K562 (cell line): ENCODE measurements at regions of chr1 and their contacts with region 1.

Region 1: GRCh38 chr1:180188091-180188506 is 33.4 kb downstream of the QSOX1 start:
- DNase-seq: peak; percentile 68 to 77 (median 74)
- ATAC-seq: peak; percentile 90
- H3K4me3 ChIP-seq: no peak overlapping the region
- H3K27ac ChIP-seq: no peak overlapping the region
- H3K4me1 ChIP-seq: peaks cover 0 to 16% of the 10 kb centered on the region in 2 experiments; a peak in 3 of 5 replicates
- H3K27me3 ChIP-seq: no peaks in the 10 kb centered on the region
- CTCF ChIP-seq: peak; percentile 81 to 91 (median 84)
- EP300 ChIP-seq: no peak
- POLR2A ChIP-seq: no peak
- RAD21 ChIP-seq: peak; percentile 63 to 82

Region 2: DNA sequence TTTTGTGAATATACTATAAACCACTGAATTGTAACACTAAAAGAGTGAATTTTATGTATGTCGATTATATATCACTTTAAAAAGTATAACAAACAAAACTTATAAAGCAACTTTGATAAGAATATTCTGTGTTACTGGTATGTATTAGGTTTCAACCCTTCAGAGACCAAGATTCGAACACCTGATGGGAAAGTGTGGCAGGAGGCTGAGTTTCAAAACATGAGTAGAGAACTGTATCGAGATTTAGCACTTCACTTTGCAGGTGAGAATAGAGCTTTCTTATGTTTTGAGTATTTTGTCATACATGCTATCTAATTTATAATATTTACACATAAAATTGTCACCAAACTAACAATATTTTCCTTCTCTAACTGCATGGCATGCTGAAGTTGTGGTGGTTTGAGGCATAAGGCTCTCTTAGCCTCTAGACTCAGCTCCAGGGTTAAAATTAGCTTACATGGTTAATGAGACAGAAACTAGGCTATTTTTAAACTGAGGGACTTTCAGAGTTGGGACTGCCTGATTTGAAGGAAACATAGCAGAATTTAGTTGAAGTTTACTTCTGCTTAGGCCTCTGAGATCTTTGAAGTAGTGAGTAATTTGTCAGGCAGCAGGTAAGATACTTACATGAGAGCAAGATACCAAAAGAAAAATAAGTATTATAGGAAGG is 184.9 kb before region 1 on chr1:
- CTCF ChIA-PET with region 1: no interaction called
- POLR2A ChIA-PET with region 1: no interaction called
- in situ Hi-C with region 1: no loop called
- intact Hi-C with region 1: no loop called
- DNase-seq: no peak
- ATAC-seq: peak; percentile 23; the same call in 1 of the 3 replicates
- H3K4me3 ChIP-seq: no peak overlapping the region
- H3K27ac ChIP-seq: no peak overlapping the region
- H3K4me1 ChIP-seq: no peaks in the 10 kb centered on the region
- H3K27me3 ChIP-seq: no peaks in the 10 kb centered on the region
- CTCF ChIP-seq: no peak
- EP300 ChIP-seq: no peak
- POLR2A ChIP-seq: no peak
- RAD21 ChIP-seq: no peak

Region 3: GRCh38 chr1:180057883-180058396 is 130.2 kb before region 1 on chr1:
- CTCF ChIA-PET with region 1: no interaction called
- POLR2A ChIA-PET with region 1: no interaction called
- in situ Hi-C with region 1: no loop called
- intact Hi-C with region 1: no loop called
- DNase-seq: peak; percentile 15 to 46 (median 26)
- ATAC-seq: peak; percentile 91
- H3K4me3 ChIP-seq: no peak overlapping the region
- H3K27ac ChIP-seq: peak overlapping the region; percentile 61; the same call in 2 of the 3 replicates
- H3K4me1 ChIP-seq: peaks cover 0 to 13% of the 10 kb centered on the region in 2 experiments; a peak in 2 of 5 replicates
- H3K27me3 ChIP-seq: no peaks in the 10 kb centered on the region
- CTCF ChIP-seq: no peak
- EP300 ChIP-seq: peak; percentile 59
- POLR2A ChIP-seq: no peak
- RAD21 ChIP-seq: no peak

Region 4: DNA sequence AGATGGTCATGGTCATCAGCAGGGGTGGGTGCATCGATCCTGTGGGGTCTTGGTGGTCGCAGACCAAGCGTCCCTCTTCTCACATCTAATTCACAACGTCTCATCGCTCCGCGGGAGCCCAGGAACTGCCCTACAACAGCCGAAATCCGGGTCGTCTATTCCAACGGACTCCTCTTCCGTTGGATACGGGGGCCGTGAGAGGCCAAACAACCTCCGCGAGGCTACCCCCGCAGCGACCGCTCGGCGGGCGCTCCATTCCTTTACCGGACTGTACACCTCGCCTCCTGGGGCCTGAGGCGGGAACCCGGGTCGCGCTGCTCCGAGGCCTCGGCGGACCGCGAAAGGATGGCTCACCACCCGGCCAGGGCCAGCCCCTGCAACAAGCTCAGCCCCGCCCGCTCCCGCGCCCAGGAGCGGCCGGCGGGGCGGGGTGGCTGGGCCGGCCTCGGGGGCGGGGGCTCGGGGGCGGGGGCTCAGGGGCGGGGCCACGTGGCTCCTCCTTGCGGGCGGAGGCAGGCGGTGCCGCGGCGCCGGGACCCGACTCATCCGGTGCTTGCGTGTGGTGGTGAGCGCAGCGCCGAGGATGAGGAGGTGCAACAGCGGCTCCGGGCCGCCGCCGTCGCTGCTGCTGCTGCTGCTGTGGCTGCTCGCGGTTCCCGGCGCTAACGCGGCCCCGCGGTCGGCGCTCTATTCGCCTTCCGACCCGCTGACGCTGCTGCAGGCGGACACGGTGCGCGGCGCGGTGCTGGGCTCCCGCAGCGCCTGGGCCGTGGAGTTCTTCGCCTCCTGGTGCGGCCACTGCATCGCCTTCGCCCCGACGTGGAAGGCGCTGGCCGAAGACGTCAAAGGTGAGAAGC is 33.5 kb before region 1 on chr1 and contains the start of gene QSOX1:
- CTCF ChIA-PET with region 1: no interaction called
- POLR2A ChIA-PET with region 1: no interaction called
- in situ Hi-C with region 1: no loop called
- intact Hi-C with region 1: no loop called
- DNase-seq: peak; percentile 91 to 100 (median 99)
- ATAC-seq: peak; percentile 91
- H3K4me3 ChIP-seq: peak within 1 kb of the TSS; percentile 77
- H3K27ac ChIP-seq: peak within 1 kb of the TSS; percentile 77
- H3K4me1 ChIP-seq: peaks cover 33 to 37% of the 10 kb centered on the region in 2 experiments
- H3K27me3 ChIP-seq: no peaks in the 10 kb centered on the region
- CTCF ChIP-seq: peak in 2 of 3 experiments; percentile 10 to 48; a peak in 1 of 6 replicates
- EP300 ChIP-seq: peak; percentile 63; the same call in 1 of the 2 replicates
- POLR2A ChIP-seq: peak; percentile 85
- RAD21 ChIP-seq: no peak
- polyA plus RNA-seq, gene QSOX1: 4.0 to 4.6 TPM

Region 5: DNA sequence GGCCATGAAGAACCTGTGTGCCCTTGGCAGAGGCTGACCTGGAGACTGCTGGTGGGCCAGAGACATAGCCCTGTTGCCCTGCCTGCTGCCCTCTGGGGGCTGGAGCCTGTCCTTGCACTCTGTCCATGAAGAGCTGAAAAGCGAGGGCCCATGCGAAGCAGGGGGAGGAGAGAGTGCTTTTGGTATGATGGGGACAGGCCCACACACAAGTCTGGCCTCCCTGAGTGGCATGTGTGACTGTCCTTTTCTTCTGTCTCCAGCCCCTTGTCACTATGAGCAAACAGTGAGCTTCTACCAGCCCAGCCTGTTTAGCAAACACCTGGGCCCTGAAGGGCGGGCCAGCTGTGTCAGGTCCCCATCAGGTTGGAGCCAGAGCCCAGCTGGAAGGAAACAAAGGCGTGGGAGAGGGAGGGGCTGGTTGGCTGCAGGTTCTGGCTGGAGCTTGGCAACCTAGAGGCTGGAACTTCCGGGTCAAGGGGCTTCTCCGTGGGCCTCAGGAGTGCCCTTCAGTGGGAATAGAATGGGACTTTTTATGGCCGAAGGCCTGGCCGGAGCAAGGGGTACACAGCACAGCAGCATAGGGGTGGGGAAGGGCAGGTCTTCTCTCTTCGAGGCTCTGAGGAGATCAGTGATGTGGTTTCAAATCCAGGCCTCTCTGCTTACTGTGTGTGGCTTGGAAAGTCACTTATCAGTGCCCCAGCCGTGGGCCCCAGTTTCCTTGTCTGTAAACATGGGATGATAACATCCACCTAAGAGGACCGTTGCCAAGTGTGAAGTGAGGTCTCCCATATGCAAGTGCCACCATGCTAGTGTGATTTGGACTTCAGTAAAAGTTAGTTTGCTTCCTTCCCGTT is 19.1 kb before region 1 on chr1:
- CTCF ChIA-PET with region 1: no interaction called
- POLR2A ChIA-PET with region 1: interaction called, 12 read pairs
- in situ Hi-C with region 1: no loop called
- intact Hi-C with region 1: no loop called
- DNase-seq: peak; percentile 70 to 78 (median 75)
- ATAC-seq: peak; percentile 93
- H3K4me3 ChIP-seq: no peak overlapping the region
- H3K27ac ChIP-seq: no peak overlapping the region
- H3K4me1 ChIP-seq: peaks cover 10 to 19% of the 10 kb centered on the region in 2 experiments; a peak in 4 of 5 replicates
- H3K27me3 ChIP-seq: no peaks in the 10 kb centered on the region
- CTCF ChIP-seq: peak; percentile 75 to 89 (median 83)
- EP300 ChIP-seq: no peak
- POLR2A ChIP-seq: no peak
- RAD21 ChIP-seq: peak; percentile 42 to 74

Region 6: GRCh38 chr1:180252638-180253536 is 64.8 kb after region 1 on chr1:
- CTCF ChIA-PET with region 1: no interaction called
- POLR2A ChIA-PET with region 1: interaction called, 3 read pairs
- in situ Hi-C with region 1: loop called (anchors 5 kb)
- intact Hi-C with region 1: loop called (anchors 2 kb)
- DNase-seq: peak; percentile 81 to 88 (median 86)
- ATAC-seq: peak; percentile 82
- H3K4me3 ChIP-seq: no peak overlapping the region
- H3K27ac ChIP-seq: no peak overlapping the region
- H3K4me1 ChIP-seq: peaks cover 0 to 21% of the 10 kb centered on the region in 2 experiments; a peak in 3 of 5 replicates
- H3K27me3 ChIP-seq: peaks cover 17 to 47% of the 10 kb centered on the region in 2 experiments; a peak in 4 of 5 replicates
- CTCF ChIP-seq: peak; percentile 96 to 99 (median 98)
- EP300 ChIP-seq: no peak
- POLR2A ChIP-seq: no peak
- RAD21 ChIP-seq: peak; percentile 87 to 97

Region 7: DNA sequence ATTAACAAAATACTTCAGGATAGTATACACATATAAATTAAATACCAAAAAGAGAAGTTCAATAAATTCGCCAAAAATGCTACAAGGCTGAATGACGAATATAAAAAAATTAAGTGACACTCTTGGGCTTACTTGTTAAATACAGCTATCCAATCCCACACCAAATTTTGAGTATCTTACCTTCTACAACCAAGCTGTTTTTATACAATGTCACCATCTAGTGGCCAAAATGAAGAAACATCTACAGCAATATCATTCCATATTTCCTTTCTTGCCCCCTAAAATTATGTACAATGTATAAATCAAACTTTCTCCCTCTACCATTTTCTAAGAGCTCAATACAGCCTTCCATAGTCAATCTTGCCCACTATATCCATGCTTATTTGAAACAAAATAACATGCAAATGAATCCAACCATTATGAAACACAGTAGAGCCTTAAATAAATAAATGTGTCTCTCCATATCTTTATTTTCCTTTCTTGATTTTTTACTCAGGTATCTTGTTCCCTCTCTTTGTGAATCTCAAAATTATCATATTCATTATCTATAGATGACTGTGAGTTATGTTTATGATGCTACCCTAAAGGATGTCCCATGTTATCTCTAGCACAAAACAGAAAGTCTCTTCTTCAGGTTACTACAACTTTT is 228.0 kb after region 1 on chr1:
- CTCF ChIA-PET with region 1: interaction called, 18 read pairs
- POLR2A ChIA-PET with region 1: no interaction called
- in situ Hi-C with region 1: loop called (anchors 5 kb)
- intact Hi-C with region 1: loop called (anchors 1 kb)
- DNase-seq: peak; percentile 47 to 58 (median 48)
- ATAC-seq: peak; percentile 94
- H3K4me3 ChIP-seq: no peak overlapping the region
- H3K27ac ChIP-seq: no peak overlapping the region
- H3K4me1 ChIP-seq: no peaks in the 10 kb centered on the region
- H3K27me3 ChIP-seq: no peaks in the 10 kb centered on the region
- CTCF ChIP-seq: peak; percentile 48 to 88 (median 58); a peak in 5 of 6 replicates
- EP300 ChIP-seq: no peak
- POLR2A ChIP-seq: no peak
- RAD21 ChIP-seq: peak; percentile 62 to 88

Region 8: GRCh38 chr1:181424786-181425403 is 1236.8 kb after region 1 on chr1:
- CTCF ChIA-PET with region 1: interaction called, 10 read pairs
- POLR2A ChIA-PET with region 1: no interaction called
- in situ Hi-C with region 1: no loop called
- intact Hi-C with region 1: no loop called
- DNase-seq: peak; percentile 78 to 87 (median 82)
- ATAC-seq: peak; percentile 92
- H3K4me3 ChIP-seq: no peak overlapping the region
- H3K27ac ChIP-seq: no peak overlapping the region
- H3K4me1 ChIP-seq: no peaks in the 10 kb centered on the region
- H3K27me3 ChIP-seq: peaks cover 3 to 8% of the 10 kb centered on the region in 2 experiments; a peak in 4 of 5 replicates
- CTCF ChIP-seq: peak; percentile 99 to 100 (median 100)
- EP300 ChIP-seq: no peak
- POLR2A ChIP-seq: no peak
- RAD21 ChIP-seq: peak; percentile 85 to 92